Activated CD4-positive, alpha-beta memory T cell treated with anti-CD3 and anti-CD28 coated beads, Interleukin-2, amount 10 ng/mL, durations not matched to agents 7 days and 5 days (primary cell): ENCODE measurements at regions of chr1 and their contacts with region 1.

Region 1: GRCh38 chr1:23559136-23559984 is at the start of gene ID3:
- DNase-seq: peak; percentile 94
- H3K4me3 Mint-ChIP-seq: peak within 1 kb of the TSS; percentile 84
- H3K27ac Mint-ChIP-seq: peak within 1 kb of the TSS; percentile 73
- H3K4me1 Mint-ChIP-seq: peaks cover 59% of the 10 kb centered on the region
- H3K27me3 Mint-ChIP-seq: peaks cover 52% of the 10 kb centered on the region
- total RNA-seq, gene ID3: 14.7 to 14.8 TPM

Region 2: DNA sequence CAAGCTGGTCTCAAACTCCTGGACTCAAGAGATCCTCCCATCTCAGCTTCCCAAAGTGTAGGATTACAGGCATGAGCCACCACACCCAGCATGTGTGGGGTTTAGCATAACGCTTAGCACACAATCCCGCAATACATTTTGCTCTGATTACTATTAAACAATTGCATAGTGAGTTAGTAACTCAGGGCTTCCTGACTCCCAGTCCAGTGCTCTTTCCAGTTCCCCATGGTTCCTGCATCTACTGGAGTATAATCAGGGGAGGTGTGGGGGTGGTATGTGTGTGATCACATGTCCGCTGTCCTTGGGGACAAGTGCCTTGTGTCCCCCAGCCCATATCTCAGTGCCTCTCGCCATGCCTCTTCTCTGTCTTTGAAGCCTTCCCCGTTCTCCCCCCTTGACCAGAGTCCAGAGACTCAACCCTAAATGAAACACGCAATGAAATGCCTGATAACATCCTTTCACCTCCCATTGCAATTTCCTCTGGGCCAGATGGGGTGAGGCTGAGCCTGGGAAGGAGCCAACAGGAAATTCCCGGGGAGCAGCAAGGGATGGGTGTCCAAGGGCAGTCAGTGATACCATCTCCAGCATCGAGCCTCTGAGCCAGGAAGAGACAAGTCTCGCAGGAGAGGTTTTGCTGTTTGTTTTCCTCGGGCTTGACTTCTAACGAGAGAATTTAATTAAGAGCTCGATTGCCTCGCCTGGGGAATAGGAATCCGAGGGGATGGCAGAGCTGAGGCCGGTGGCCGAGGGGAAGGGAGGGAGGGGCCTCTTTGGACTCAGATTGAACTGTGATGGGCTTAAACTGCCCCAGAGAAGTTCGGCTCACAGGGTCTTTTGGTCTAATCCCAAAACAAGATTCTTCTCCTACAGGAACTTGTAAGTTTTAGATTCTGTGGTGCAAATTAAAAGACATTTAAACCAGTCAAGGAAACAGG is 334.4 kb before region 1 on chr1:
- CTCF ChIA-PET with region 1: no interaction called
- POLR2A ChIA-PET with region 1: no interaction called
- DNase-seq: no peak
- H3K4me3 Mint-ChIP-seq: no peak overlapping the region
- H3K27ac Mint-ChIP-seq: no peak overlapping the region
- H3K4me1 Mint-ChIP-seq: no peaks in the 10 kb centered on the region
- H3K27me3 Mint-ChIP-seq: peaks cover 27% of the 10 kb centered on the region

Region 3: GRCh38 chr1:23514111-23514679 is 45.2 kb before region 1 on chr1:
- CTCF ChIA-PET with region 1: no interaction called
- POLR2A ChIA-PET with region 1: no interaction called
- DNase-seq: no peak
- H3K4me3 Mint-ChIP-seq: no peak overlapping the region
- H3K27ac Mint-ChIP-seq: no peak overlapping the region
- H3K4me1 Mint-ChIP-seq: peaks cover 4% of the 10 kb centered on the region
- H3K27me3 Mint-ChIP-seq: no peaks in the 10 kb centered on the region

Region 4: GRCh38 chr1:23539698-23540266 is 19.6 kb before region 1 on chr1:
- CTCF ChIA-PET with region 1: interaction called, 19 read pairs
- POLR2A ChIA-PET with region 1: interaction called, 9 read pairs
- DNase-seq: peak; percentile 95
- H3K4me3 Mint-ChIP-seq: no peak overlapping the region
- H3K27ac Mint-ChIP-seq: peak overlapping the region; percentile 38
- H3K4me1 Mint-ChIP-seq: peaks cover 28% of the 10 kb centered on the region
- H3K27me3 Mint-ChIP-seq: peaks cover 6% of the 10 kb centered on the region

Region 5: GRCh38 chr1:23598424-23598823 is 39.1 kb after region 1 on chr1:
- CTCF ChIA-PET with region 1: interaction called, 3 read pairs
- POLR2A ChIA-PET with region 1: interaction called, 19 read pairs
- DNase-seq: no peak
- H3K4me3 Mint-ChIP-seq: no peak overlapping the region
- H3K27ac Mint-ChIP-seq: no peak overlapping the region
- H3K4me1 Mint-ChIP-seq: peaks cover 48% of the 10 kb centered on the region
- H3K27me3 Mint-ChIP-seq: no peaks in the 10 kb centered on the region

Region 6: GRCh38 chr1:23619299-23620188 is 60.2 kb after region 1 on chr1:
- CTCF ChIA-PET with region 1: interaction called, 4 read pairs
- POLR2A ChIA-PET with region 1: interaction called, 34 read pairs
- DNase-seq: peak; percentile 76
- H3K4me3 Mint-ChIP-seq: peak overlapping the region; percentile 67
- H3K27ac Mint-ChIP-seq: peak overlapping the region; percentile 70
- H3K4me1 Mint-ChIP-seq: peaks cover 53% of the 10 kb centered on the region
- H3K27me3 Mint-ChIP-seq: peaks cover 15% of the 10 kb centered on the region

Region 7: GRCh38 chr1:23736437-23737134 is 177.2 kb after region 1 on chr1:
- CTCF ChIA-PET with region 1: no interaction called
- POLR2A ChIA-PET with region 1: no interaction called
- DNase-seq: peak; percentile 25
- H3K4me3 Mint-ChIP-seq: no peak overlapping the region
- H3K27ac Mint-ChIP-seq: no peak overlapping the region
- H3K4me1 Mint-ChIP-seq: peaks cover 11% of the 10 kb centered on the region
- H3K27me3 Mint-ChIP-seq: no peaks in the 10 kb centered on the region